Motor neuron (in vitro differentiated cells): ENCODE measurements at regions of chr20 and their contacts with region 1.

Region 1: GRCh38 chr20:33653218-33653899 is 8.8 kb upstream of the C20orf144 start:
- ATAC-seq: peak; percentile 44 to 86 (median 66)
- H3K4me3 ChIP-seq: no peak overlapping the region
- H3K27ac ChIP-seq: no peak overlapping the region
- H3K4me1 ChIP-seq: peaks cover 21 to 24% of the 10 kb centered on the region in 2 donors

Region 2: GRCh38 chr20:32664678-32665159 is 988.6 kb before region 1 on chr20:
- in situ Hi-C with region 1: no loop called
- ATAC-seq: peak; percentile 11 to 34 (median 16)
- H3K4me3 ChIP-seq: no peak overlapping the region
- H3K27ac ChIP-seq: no peak overlapping the region
- H3K4me1 ChIP-seq: peaks cover 17 to 18% of the 10 kb centered on the region in 2 donors

Region 3: DNA sequence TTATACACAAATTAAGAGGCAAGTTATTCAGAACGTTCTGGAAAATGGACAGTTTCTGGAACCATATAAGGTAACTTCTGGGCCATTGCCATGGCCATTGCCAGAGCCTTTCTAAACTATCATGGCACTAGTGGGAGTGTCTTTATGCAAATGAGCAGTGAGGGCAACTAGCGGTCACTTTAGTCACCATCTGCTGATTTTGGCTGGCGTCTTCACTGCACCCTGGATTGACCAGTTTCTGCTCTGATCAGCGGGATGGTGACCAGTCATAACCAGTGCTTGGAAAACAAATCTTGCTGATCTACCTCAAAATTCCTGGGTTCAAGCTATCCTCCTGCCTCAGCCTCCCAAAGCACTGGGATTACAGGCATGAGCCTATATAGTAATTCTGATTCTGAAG is 202.5 kb before region 1 on chr20:
- in situ Hi-C with region 1: loop called in 3 of 9 experiments (anchors 10 kb)
- ATAC-seq: peak in 2 of 8 experiments; percentile 29 to 35
- H3K4me3 ChIP-seq: no peak overlapping the region
- H3K27ac ChIP-seq: no peak overlapping the region
- H3K4me1 ChIP-seq: no peaks in the 10 kb centered on the region

Region 4: GRCh38 chr20:33465481-33466302 is 187.7 kb before region 1 on chr20:
- in situ Hi-C with region 1: loop called in 1 of 9 experiments (anchors 10 kb)
- ATAC-seq: peak in 5 of 8 experiments; percentile 75 to 88 (median 85)
- H3K4me3 ChIP-seq: no peak overlapping the region
- H3K27ac ChIP-seq: peak overlapping the region in 1 of 2 donors; percentile 59
- H3K4me1 ChIP-seq: peaks cover 9 to 15% of the 10 kb centered on the region in 2 donors